ENCODE measurements at regions of chr17 and their contacts with region 1.

Region 1: DNA sequence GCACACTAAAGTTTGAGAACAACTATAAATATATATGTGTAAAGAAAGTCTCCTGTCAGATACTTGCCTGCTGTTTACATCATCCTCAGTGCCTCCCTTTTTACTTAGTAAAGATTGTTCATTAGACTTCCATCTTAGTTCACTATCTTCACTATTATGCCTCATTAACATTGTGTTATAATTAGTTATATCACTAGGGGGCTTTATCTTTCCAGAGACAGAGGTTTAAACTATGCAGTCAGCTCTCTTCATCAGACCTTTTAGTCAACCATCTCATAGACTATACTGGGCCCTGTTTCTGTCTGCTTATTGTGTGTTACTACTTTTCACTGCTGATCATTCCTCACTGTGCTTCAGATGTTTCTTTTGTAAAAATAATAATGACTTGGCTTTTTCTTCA is 630.8 kb upstream of the KIF2B start:
- DNase-seq: no peak
- H3K4me3 ChIP-seq: no peak overlapping the region
- H3K27ac ChIP-seq: no peak overlapping the region
- H3K4me1 ChIP-seq: no peaks in the 10 kb centered on the region
- H3K27me3 ChIP-seq: no peaks in the 10 kb centered on the region
- CTCF ChIP-seq: no peak
- EP300 ChIP-seq: no peak
- POLR2A ChIP-seq: no peak

Region 2: GRCh38 chr17:52660692-52661091 is 531.2 kb before region 1 on chr17:
- intact Hi-C with region 1: loop called (anchors 10 kb)
- DNase-seq: no peak
- H3K4me3 ChIP-seq: no peak overlapping the region
- H3K27ac ChIP-seq: no peak overlapping the region
- H3K4me1 ChIP-seq: no peaks in the 10 kb centered on the region
- H3K27me3 ChIP-seq: no peaks in the 10 kb centered on the region
- CTCF ChIP-seq: no peak
- EP300 ChIP-seq: no peak
- POLR2A ChIP-seq: no peak

Region 3: DNA sequence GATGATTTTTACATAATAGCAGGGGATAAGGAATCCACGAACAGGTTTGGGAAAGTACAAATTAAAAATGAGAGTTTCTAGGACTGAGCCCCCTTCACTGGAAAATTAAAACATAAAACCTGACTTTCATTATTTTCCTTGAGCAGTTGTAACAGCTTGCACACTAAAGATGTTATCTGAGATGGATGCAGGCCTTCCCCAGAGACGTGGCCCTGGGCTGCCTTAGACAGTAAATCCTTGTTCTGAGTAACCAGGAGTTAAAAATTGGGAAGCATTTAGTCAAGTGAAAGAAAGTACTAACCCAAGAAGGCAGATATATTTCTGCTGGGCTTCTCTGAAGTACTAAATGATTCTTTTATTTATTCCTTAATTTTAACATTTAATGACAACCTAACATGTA is 198.7 kb after region 1 on chr17:
- intact Hi-C with region 1: no loop called
- DNase-seq: no peak
- H3K4me3 ChIP-seq: no peak overlapping the region
- H3K27ac ChIP-seq: no peak overlapping the region
- H3K4me1 ChIP-seq: no peaks in the 10 kb centered on the region
- H3K27me3 ChIP-seq: no peaks in the 10 kb centered on the region
- CTCF ChIP-seq: no peak
- EP300 ChIP-seq: no peak
- POLR2A ChIP-seq: no peak

Measured in esophagus muscularis mucosa (tissue), 4 donors.